GM12878 (cell line): ENCODE measurements at regions of chr5 and their contacts with region 1.

Region 1: GRCh38 chr5:56838409-56839039 is 23.2 kb downstream of the MAP3K1 start:
- DNase-seq: peak; percentile 42
- ATAC-seq: peak; percentile 85
- H3K4me3 ChIP-seq: no peak overlapping the region; the same call in 1 of the 2 replicates
- H3K27ac ChIP-seq: no peak overlapping the region
- H3K4me1 ChIP-seq: peaks cover 8% of the 10 kb centered on the region; the same call in 1 of the 2 replicates
- H3K27me3 ChIP-seq: no peaks in the 10 kb centered on the region
- CTCF ChIP-seq: peak; percentile 41 to 78 (median 52); a peak in 5 of 6 replicates
- EP300 ChIP-seq: no peak
- POLR2A ChIP-seq: no peak
- RAD21 ChIP-seq: peak; percentile 79

Region 2: DNA sequence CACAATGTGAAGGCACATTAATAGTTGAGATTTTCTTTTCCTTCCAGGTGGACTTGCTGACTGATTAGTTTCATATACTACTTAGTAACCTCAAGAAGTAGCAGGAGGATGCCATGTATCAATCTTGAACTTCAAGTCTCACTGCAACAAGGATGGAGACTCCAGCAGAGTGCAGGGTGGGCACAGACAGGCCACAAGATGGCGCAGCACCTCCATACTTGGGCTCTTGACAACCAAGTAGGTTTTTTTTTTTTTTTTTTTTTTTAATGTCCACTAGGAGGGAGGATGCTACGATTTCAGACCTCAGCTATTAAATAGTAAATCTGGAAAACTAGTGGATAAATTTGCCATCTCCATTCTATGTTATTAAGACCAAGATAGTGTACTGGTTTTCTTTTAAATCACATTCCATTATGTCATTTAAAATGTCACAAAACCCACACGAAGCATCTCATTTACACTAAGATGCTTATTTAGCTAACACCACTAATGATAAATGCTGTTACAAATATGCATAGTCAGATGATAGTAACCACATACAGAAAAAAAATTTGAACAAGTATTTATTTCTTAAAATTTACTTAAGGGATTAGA is 902.3 kb before region 1 on chr5:
- CTCF ChIA-PET with region 1: interaction called, 11 read pairs
- POLR2A ChIA-PET with region 1: no interaction called
- RAD21 ChIA-PET with region 1: interaction called, 5 read pairs
- SMC1A ChIA-PET with region 1: interaction called, 8 read pairs
- in situ Hi-C with region 1: loop called (anchors 10 kb)
- intact Hi-C with region 1: no loop called
- DNase-seq: no peak
- ATAC-seq: peak; percentile 81
- H3K4me3 ChIP-seq: no peak overlapping the region
- H3K27ac ChIP-seq: no peak overlapping the region
- H3K4me1 ChIP-seq: no peaks in the 10 kb centered on the region
- H3K27me3 ChIP-seq: no peaks in the 10 kb centered on the region
- CTCF ChIP-seq: peak; percentile 83 to 94 (median 87)
- EP300 ChIP-seq: no peak
- POLR2A ChIP-seq: no peak
- RAD21 ChIP-seq: peak; percentile 92

Region 3: GRCh38 chr5:56288873-56289601 is 549.5 kb before region 1 on chr5:
- CTCF ChIA-PET with region 1: no interaction called
- POLR2A ChIA-PET with region 1: no interaction called
- RAD21 ChIA-PET with region 1: interaction called, 4 read pairs
- SMC1A ChIA-PET with region 1: interaction called, 13 read pairs
- in situ Hi-C with region 1: no loop called
- intact Hi-C with region 1: no loop called
- DNase-seq: no peak
- ATAC-seq: no peak
- H3K4me3 ChIP-seq: no peak overlapping the region
- H3K27ac ChIP-seq: no peak overlapping the region
- H3K4me1 ChIP-seq: no peaks in the 10 kb centered on the region
- H3K27me3 ChIP-seq: no peaks in the 10 kb centered on the region
- CTCF ChIP-seq: no peak
- EP300 ChIP-seq: no peak
- POLR2A ChIP-seq: no peak
- RAD21 ChIP-seq: no peak

Region 4: GRCh38 chr5:56328753-56329560 is 509.6 kb before region 1 on chr5:
- CTCF ChIA-PET with region 1: interaction called, 9 read pairs
- POLR2A ChIA-PET with region 1: no interaction called
- RAD21 ChIA-PET with region 1: interaction called, 12 read pairs
- SMC1A ChIA-PET with region 1: interaction called, 18 read pairs
- in situ Hi-C with region 1: no loop called
- intact Hi-C with region 1: no loop called
- DNase-seq: peak; percentile 78
- ATAC-seq: peak; percentile 82
- H3K4me3 ChIP-seq: peak overlapping the region; percentile 14; the same call in 1 of the 2 replicates
- H3K27ac ChIP-seq: peak overlapping the region; percentile 59
- H3K4me1 ChIP-seq: peaks cover 21% of the 10 kb centered on the region
- H3K27me3 ChIP-seq: no peaks in the 10 kb centered on the region
- CTCF ChIP-seq: no peak
- EP300 ChIP-seq: peak in 1 of 2 experiments; percentile 70; a peak in 1 of 4 replicates
- POLR2A ChIP-seq: no peak
- RAD21 ChIP-seq: no peak

Region 5: DNA sequence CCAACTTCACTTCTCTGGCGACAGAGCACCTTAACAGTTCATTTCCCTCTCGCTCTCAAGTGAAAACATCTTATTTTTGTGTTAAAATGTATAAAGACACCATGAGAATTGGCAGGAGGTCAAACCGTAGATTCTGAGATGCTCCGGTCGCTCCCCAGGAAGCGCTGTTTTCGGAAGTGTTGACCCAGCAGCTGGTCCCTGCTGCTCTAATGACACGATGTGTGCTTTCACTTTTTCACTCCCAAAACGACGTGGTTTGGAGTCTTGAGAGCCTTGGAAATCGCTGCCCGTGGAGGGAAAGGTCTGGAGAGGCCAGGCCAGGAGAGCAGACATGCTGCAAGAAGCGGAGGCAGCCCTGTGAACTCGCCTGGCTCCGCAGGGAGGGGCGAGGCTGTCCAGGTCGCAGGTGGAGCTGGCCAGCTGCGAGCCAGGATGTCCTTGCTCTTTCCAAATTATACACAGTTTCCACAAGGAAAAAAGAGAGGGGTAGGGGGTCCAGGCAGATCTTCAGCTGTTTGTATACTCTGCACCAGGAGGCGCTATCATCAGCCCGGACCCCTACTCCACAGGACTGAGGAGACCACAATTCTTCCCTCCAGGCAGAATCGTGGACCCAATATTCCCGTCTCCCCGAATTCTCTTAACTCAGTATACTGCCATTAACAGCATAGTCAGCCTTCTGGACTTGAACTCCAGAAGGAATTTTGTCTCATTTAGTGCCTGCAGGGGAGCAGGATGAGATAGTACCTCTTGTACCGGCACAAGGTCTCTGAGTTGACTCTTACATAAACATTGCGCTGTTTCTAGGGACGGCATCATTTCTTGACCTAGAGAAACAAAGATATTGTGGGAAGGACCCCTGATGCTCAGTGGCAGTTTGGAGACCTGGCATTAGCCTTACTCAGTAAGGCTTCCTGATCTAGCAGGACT is 356.8 kb before region 1 on chr5:
- CTCF ChIA-PET with region 1: interaction called, 29 read pairs
- POLR2A ChIA-PET with region 1: no interaction called
- RAD21 ChIA-PET with region 1: interaction called, 18 read pairs
- SMC1A ChIA-PET with region 1: interaction called, 18 read pairs
- in situ Hi-C with region 1: loop called (anchors 5 kb)
- intact Hi-C with region 1: loop called (anchors 5 kb)
- DNase-seq: peak; percentile 23
- ATAC-seq: peak; percentile 58
- H3K4me3 ChIP-seq: peak overlapping the region; percentile 87
- H3K27ac ChIP-seq: peak overlapping the region; percentile 4; the same call in 1 of the 2 replicates
- H3K4me1 ChIP-seq: peaks cover 24% of the 10 kb centered on the region
- H3K27me3 ChIP-seq: no peaks in the 10 kb centered on the region
- CTCF ChIP-seq: peak; percentile 15 to 31 (median 26); a peak in 2 of 6 replicates
- EP300 ChIP-seq: no peak
- POLR2A ChIP-seq: no peak
- RAD21 ChIP-seq: peak; percentile 32; the same call in 1 of the 2 replicates

Region 6: GRCh38 chr5:56686337-56687195 is 152.0 kb before region 1 on chr5:
- CTCF ChIA-PET with region 1: interaction called, 12 read pairs
- POLR2A ChIA-PET with region 1: interaction called, 3 read pairs
- RAD21 ChIA-PET with region 1: interaction called, 7 read pairs
- SMC1A ChIA-PET with region 1: interaction called, 11 read pairs
- in situ Hi-C with region 1: no loop called
- intact Hi-C with region 1: no loop called
- DNase-seq: peak; percentile 46
- ATAC-seq: peak; percentile 87
- H3K4me3 ChIP-seq: peak overlapping the region; percentile 35; the same call in 1 of the 2 replicates
- H3K27ac ChIP-seq: peak overlapping the region; percentile 68
- H3K4me1 ChIP-seq: peaks cover 24% of the 10 kb centered on the region
- H3K27me3 ChIP-seq: no peaks in the 10 kb centered on the region
- CTCF ChIP-seq: no peak
- EP300 ChIP-seq: peak; percentile 76 to 92
- POLR2A ChIP-seq: no peak
- RAD21 ChIP-seq: no peak

Region 7: DNA sequence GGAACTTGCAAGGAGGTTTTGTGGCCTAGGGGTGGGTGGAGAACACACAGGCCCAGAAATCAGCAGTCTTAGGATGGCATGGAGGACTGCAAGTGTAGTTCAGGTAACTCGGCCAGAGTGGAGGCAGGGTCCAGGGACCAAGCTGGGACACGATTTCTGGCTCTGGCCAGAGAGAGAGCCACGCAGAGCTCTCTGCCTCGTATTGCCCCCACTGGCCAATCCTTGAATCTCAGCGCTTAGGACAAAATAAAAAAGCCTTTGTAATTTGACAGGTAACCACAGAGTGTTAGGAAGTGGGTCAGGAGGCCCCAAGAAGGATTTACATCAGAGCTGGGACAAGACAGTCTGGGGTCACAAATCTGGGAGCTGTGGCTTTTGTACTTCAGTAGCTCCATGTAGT is 11.5 kb before region 1 on chr5:
- CTCF ChIA-PET with region 1: interaction called, 55 read pairs
- POLR2A ChIA-PET with region 1: interaction called, 9 read pairs
- RAD21 ChIA-PET with region 1: interaction called, 37 read pairs
- SMC1A ChIA-PET with region 1: interaction called, 49 read pairs
- in situ Hi-C with region 1: no loop called
- intact Hi-C with region 1: no loop called
- DNase-seq: no peak
- ATAC-seq: peak; percentile 52
- H3K4me3 ChIP-seq: no peak overlapping the region
- H3K27ac ChIP-seq: no peak overlapping the region
- H3K4me1 ChIP-seq: peaks cover 7% of the 10 kb centered on the region
- H3K27me3 ChIP-seq: no peaks in the 10 kb centered on the region
- CTCF ChIP-seq: peak in 2 of 3 experiments; percentile 27 to 33; a peak in 3 of 6 replicates
- EP300 ChIP-seq: no peak
- POLR2A ChIP-seq: no peak
- RAD21 ChIP-seq: peak; percentile 39; the same call in 1 of the 2 replicates